Right ventricle myocardium superior (tissue), 1 donor: ENCODE measurements at regions of chr4 and their contacts with region 1.

Region 1: DNA sequence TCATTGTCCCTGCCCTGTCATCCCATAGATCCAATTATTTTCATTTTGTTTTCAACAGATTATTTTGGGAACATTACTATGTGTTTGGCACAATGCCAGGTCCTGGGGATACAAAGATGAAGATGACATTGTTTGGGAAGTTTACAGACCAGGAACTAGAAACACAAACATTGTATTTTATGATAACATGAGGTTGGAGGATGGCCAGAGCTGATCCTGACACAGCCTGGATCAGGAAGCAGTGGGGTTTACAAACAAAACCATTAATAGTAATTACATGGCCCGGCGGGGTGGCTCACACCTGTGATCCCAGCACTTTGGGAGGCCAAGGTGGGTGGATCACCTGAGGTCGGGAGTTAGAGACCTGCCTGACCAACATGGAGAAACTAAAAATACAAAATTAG is 29.9 kb downstream of the CLRN2 start:
- DNase-seq: no peak
- ATAC-seq: no peak

Region 2: DNA sequence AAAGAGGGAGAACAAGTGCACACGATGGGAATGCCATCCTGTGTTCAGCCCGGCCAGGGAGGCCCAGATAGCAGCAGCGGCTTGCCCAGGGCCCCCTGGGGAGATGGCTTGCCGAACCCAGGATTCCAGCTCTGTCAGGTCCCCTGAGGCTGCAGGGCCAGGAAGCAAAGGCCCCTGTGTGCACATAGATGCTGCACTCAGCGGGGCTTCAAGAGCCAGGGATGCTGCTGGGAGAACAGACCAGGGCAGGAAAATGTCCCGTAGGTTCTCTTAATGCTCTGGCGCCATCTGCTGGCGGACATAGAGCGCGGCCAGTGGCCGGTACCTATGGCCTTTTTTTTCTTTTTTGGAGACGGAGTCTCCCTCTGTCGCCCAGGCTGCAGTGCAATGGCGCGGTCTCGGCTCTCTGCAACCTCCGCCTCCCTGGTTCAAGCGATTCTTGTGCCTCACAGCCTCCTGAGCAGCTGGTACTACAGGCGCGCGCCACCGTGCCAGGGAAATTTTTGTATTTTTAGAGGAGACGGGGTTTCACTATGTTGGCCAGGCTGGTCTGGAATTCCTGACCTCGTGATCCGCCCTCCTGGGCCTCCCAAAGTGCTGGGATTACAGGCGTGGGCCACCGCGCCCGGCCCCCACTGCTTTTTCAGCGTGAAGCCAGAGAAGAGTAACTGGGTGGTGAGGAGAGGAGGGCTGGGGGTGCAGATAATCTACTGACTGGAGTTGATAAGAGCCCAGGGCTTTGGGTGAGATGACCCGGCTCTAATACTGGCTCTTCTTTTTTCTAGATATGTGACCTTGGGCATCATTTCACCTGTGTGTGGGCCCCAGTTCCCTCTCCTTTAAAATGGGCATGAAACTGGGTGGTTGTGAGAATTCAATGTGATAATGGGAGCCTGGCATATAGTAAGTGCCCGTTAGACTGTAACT is 92.1 kb after region 1 on chr4:
- intact Hi-C with region 1: loop called (anchors 5 kb)
- DNase-seq: peak; percentile 87
- ATAC-seq: peak; percentile 92